Activated B cell treated with CpG ODN at 0.5 μM for 24 hours (primary cell): ENCODE measurements at regions of chr10 and their contacts with region 1.

Region 1: DNA sequence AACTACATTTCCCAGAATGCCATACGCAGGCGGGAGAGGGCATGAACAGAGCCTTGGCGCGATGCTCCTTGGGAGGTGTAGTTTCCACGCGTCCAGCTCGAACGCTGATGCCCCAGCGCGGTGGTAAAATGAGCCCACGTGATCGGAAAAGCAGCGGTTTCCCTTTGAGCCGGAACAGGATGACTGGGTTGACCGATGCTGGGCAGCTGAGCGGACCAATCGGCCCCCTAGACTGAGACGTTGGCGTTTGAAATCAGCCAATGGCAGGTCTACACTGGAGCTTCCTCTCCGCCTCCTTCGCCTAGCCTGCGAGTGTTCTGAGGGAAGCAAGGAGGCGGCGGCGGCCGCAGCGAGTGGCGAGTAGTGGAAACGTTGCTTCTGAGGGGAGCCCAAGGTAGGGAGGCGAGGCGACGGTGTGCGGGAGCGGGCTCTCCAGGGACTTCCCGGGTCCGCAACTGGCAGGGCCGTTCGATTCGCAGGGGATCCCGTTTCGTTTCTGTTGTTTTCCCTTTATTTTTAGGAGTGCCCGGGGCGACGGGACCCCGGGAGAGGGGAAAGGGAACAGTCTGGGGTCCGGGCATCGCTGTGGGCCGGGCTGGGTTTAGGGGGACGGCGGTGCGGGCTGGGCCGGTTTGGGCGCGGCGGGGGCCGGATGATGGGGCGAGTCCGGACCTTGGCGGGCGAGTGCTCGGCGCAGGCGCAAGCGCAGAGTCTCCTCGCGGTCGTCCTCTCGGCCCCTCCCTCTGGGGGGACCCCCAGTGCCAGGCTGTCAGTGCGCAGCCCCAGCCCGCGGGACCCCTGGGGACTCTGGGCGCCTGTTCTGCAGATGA is at the start of gene BUB3:
- DNase-seq: peak; percentile 80
- ATAC-seq: peak; percentile 91
- H3K4me3 Mint-ChIP-seq: peak within 1 kb of the TSS; percentile 100
- H3K27ac Mint-ChIP-seq: peak within 1 kb of the TSS; percentile 99
- H3K4me1 Mint-ChIP-seq: peaks cover 73% of the 10 kb centered on the region
- H3K27me3 Mint-ChIP-seq: peaks cover 13% of the 10 kb centered on the region
- CTCF ChIP-seq: no peak
- total RNA-seq, gene BUB3: 137 and 141 TPM in 2 replicates

Region 2: DNA sequence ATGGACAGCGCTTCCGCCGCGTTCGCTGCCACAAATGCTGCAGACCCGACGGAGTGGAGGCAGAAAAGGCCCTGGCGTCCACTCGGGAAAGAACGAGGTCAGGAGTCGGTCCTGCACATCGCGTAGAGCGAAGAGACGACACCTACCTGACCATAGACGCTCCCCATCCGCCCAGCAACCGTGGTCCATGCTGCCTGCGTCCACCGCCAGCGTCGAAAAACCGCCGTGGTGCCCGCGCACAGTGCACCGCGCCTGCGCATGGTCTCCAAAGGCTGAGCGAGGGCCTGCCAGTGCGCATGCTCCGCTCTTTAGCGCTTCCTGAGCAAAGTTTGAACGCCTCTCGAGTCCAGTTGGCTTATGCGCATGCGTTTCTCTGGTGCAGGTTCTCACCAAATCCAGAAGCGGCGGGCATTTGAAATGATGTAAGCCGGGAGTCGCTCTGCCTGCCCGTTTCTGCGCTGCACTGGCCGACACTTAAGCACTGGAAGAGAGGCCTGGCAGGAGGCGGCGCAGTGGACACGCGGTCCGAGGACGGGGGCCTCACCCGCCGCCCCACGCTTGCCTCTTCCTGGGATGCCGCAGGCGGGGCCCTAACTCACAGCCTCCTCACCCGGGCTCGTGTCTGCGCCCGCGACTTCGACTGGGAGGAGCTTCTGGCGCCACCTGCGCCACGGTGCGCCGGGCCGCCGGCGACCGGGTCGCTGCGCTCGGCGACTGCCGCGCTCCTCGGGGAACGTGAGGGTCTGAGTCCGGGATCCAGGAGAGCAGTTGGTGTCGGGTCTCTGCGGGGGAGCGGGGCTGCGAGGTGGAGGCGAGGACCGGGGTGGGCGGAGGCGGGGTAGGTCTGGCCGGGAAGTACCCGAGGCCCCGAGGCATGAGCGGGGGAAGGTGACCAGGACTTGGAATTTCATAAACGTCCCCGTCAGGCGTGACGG is 274.7 kb before region 1 on chr10 and contains the start of gene FAM24B:
- CTCF ChIA-PET with region 1: no interaction called
- POLR2A ChIA-PET with region 1: no interaction called
- intact Hi-C with region 1: loop called (anchors 1 kb)
- DNase-seq: peak; percentile 83
- ATAC-seq: peak; percentile 85
- H3K4me3 Mint-ChIP-seq: peak within 1 kb of the TSS; percentile 85
- H3K27ac Mint-ChIP-seq: peak within 1 kb of the TSS; percentile 84
- H3K4me1 Mint-ChIP-seq: peaks cover 40% of the 10 kb centered on the region
- H3K27me3 Mint-ChIP-seq: no peaks in the 10 kb centered on the region
- CTCF ChIP-seq: no peak
- total RNA-seq, gene FAM24B: 7.3 and 10.0 TPM in 2 replicates

Region 3: DNA sequence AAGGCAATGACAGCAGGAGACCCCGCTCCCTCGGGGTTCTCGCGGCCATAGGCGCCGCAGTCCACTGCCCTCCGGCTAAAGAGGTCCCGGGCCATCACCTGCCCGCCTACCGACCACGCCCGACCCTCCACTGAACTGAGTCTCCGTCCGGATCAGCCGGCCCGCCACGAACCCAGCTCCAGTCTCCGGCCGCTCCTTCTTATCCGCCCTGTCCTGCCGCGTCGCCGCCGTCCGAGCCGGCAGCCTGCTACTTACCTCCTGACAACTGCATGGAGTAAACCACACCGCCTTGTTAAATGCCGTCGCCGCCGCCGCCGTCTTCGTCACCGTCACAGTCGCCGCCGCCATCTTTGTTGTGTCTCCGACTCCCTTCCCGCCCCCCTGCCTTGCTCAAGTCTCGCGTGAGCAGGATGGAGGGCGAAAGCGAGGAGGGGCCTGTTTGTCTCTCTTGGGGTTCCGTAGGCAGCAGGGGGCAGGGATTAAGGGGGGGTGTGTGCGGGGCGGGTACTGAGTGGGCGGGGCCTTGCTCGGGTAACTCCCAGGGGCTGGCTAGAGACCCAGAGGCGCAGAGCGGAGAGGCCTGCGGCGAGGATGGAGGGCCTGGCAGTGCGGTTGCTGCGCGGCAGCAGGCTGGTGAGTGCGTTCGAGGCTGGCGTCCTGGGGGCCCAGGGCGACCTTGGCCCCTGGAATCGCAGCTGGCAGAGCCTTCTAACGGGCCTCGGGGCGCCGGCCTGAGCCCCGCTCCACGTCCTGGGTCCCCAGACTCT is 145.7 kb before region 1 on chr10 and contains the starts of genes ACADSB and IKZF5:
- CTCF ChIA-PET with region 1: interaction called, 3 read pairs
- POLR2A ChIA-PET with region 1: interaction called, 18 read pairs
- intact Hi-C with region 1: loop called (anchors 1 kb)
- DNase-seq: peak; percentile 83
- ATAC-seq: peak; percentile 94
- H3K4me3 Mint-ChIP-seq: peak within 1 kb of the TSS; percentile 96
- H3K27ac Mint-ChIP-seq: peak within 1 kb of the TSS; percentile 96
- H3K4me1 Mint-ChIP-seq: peaks cover 50% of the 10 kb centered on the region
- H3K27me3 Mint-ChIP-seq: no peaks in the 10 kb centered on the region
- CTCF ChIP-seq: no peak
- total RNA-seq, gene ACADSB: 22.7 and 22.8 TPM in 2 replicates
- total RNA-seq, gene IKZF5: 14.2 and 17.0 TPM in 2 replicates

Region 4: DNA sequence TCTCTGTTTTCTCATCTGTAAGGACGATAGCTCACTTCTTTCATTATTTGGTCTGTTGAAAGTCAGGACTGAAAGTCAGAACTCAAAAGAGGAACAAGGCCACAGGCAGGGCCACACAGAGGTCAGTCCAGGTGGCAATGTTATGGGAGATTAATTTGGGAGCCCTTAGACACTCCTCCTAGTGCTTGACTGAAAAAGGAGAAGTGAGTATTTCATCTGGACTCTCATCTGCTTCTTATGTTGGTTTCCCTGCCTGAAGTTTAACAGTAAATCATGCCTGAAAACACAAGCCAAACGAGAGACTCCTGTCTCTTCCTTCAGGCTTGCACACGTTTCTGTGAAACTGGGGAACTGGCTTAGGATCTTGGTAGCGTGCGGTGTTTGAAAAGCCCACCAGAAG is 248.3 kb after region 1 on chr10:
- CTCF ChIA-PET with region 1: no interaction called
- POLR2A ChIA-PET with region 1: interaction called, 5 read pairs
- intact Hi-C with region 1: loop called (anchors 1 kb)
- DNase-seq: no peak
- ATAC-seq: peak; percentile 92
- H3K4me3 Mint-ChIP-seq: peak overlapping the region; percentile 59
- H3K27ac Mint-ChIP-seq: peak overlapping the region; percentile 85
- H3K4me1 Mint-ChIP-seq: peaks cover 56% of the 10 kb centered on the region
- H3K27me3 Mint-ChIP-seq: no peaks in the 10 kb centered on the region
- CTCF ChIP-seq: no peak

Region 5: DNA sequence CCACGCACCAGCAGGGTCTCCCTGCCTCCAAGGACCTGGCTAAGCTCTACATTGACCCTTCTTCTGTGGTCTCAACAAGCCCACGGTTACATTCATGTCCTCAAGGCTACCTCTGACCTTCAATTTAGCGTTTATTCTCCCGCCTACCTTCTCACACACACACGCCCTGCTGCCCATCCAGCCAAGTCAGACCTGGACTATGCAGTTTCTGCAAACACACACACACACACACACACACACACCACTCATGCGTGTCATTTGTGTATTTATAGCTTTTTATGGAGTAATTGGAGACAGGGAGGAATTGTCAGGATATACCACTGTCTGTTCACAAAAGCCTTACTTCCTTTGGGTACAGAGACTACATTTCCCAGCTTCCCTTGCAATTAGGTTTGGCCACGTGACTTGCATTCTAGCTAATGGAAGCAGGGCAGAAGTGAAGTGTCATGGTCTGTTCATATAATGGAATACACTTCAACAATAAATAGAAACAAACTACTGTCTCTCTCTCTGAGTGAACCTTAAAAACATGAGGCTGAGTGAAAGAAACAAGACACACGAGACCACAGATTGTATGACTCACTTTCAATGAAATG is 791.1 kb after region 1 on chr10:
- CTCF ChIA-PET with region 1: no interaction called
- POLR2A ChIA-PET with region 1: no interaction called
- intact Hi-C with region 1: no loop called
- DNase-seq: no peak
- ATAC-seq: no peak
- H3K4me3 Mint-ChIP-seq: no peak overlapping the region
- H3K27ac Mint-ChIP-seq: no peak overlapping the region
- H3K4me1 Mint-ChIP-seq: no peaks in the 10 kb centered on the region
- H3K27me3 Mint-ChIP-seq: peaks cover 14% of the 10 kb centered on the region
- CTCF ChIP-seq: no peak

Region 6: DNA sequence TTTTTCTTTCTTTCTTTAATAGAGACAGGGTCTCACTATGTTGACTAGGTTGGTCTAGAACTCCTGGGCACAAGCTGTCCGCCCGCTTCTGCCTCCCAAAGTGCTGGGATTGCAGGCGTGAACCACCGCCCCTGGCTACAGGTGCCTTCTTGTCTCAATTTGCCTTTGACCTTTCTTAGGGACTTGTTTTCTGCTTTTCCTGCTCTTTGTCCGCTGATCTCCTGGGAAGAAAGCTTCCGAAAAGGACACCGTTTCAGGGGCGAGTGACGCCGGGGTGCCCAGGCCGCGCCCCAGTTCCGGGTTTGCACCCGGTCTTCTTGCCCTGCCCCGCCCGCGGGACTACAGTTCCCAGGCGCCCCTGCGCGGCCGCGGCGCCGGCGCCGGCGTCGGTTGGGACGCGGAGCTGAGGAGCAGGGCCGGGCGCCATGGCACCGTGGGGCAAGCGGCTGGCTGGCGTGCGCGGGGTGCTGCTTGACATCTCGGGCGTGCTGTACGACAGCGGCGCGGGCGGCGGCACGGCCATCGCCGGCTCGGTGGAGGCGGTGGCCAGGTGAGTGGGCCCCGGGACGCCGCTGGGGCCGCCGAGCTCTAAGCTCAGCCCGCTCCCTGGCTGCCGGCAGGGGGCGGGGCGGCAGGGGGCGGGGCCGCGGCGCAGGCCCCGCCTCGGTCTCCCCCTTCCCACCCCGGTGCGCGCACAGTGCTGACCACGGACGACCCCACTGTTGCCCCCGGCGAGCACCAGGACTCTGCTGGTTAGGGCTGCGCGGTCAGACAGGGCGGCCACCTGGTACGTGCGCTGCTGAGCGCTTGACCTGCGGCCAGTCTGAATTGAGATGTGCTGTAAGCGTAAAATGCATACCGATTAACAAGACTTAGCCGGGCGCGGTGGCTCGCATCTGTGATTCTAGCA is 1307.4 kb after region 1 on chr10 and contains the start of gene LHPP:
- CTCF ChIA-PET with region 1: no interaction called
- POLR2A ChIA-PET with region 1: interaction called, 3 read pairs
- intact Hi-C with region 1: loop called (anchors 1 kb)
- DNase-seq: peak; percentile 91
- ATAC-seq: peak; percentile 92
- H3K4me3 Mint-ChIP-seq: peak within 1 kb of the TSS; percentile 92
- H3K27ac Mint-ChIP-seq: peak within 1 kb of the TSS; percentile 95
- H3K4me1 Mint-ChIP-seq: peaks cover 32% of the 10 kb centered on the region
- H3K27me3 Mint-ChIP-seq: peaks cover 4% of the 10 kb centered on the region
- CTCF ChIP-seq: no peak
- total RNA-seq, gene LHPP: 21.0 and 22.9 TPM in 2 replicates